Activated B cell treated with CpG ODN at 0.5 μM for 24 hours (primary cell): ENCODE measurements at regions of chr15 and their contacts with region 1.

Region 1: GRCh38 chr15:51229907-51230330 is 108.5 kb downstream of the CYP19A1 start:
- DNase-seq: no peak
- ATAC-seq: no peak
- H3K4me3 Mint-ChIP-seq: no peak overlapping the region
- H3K27ac Mint-ChIP-seq: no peak overlapping the region
- H3K4me1 Mint-ChIP-seq: peaks cover 7% of the 10 kb centered on the region
- H3K27me3 Mint-ChIP-seq: peaks cover 3% of the 10 kb centered on the region
- CTCF ChIP-seq: no peak

Region 2: DNA sequence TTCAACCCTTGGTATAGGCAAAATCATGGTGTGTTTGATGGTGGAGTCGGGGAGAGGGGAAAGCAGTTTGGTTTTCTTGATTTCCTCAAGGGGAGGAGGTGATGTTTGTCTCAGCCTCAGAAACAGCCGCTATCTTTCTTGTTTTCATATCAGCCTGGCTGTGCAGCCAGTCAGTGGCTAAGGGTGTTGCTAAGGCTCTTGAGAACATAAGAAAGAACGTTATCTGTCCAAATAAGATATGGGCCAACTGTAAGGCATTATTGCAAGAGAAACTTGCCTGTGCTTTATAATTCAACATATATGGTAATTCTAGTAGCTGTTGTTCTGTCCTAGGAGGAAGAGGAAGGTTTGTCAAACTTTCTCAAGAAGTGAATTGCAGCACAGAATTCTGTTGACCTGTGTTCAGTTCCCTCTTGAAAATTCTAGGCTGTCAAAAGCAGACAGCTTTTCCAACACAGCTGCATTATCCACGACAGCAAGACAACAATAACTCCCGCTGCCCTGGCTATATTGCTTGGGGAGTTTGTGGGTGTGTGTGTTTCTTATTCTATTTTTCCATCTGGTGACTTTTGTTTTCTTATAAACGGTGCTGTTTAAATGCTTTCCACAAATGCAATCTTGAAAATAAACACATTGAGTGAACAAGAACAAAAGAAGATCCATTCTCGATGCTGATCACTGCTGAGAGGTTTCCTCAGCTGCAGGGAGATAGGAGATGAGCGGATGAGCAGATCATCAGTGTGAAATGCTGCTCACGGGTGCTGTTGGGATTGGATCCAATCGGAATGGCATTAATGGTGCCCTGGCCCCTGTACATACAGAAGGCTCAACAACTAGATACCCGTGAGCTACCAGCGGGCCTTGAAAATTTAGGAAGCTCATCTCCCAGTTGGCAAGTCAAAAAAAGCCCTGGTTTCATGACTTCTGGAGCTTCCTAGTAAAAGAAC is 44.4 kb before region 1 on chr15:
- CTCF ChIA-PET with region 1: no interaction called
- POLR2A ChIA-PET with region 1: no interaction called
- intact Hi-C with region 1: no loop called
- DNase-seq: no peak
- ATAC-seq: no peak
- H3K4me3 Mint-ChIP-seq: no peak overlapping the region
- H3K27ac Mint-ChIP-seq: no peak overlapping the region
- H3K4me1 Mint-ChIP-seq: no peaks in the 10 kb centered on the region
- H3K27me3 Mint-ChIP-seq: peaks cover 23% of the 10 kb centered on the region
- CTCF ChIP-seq: no peak

Region 3: DNA sequence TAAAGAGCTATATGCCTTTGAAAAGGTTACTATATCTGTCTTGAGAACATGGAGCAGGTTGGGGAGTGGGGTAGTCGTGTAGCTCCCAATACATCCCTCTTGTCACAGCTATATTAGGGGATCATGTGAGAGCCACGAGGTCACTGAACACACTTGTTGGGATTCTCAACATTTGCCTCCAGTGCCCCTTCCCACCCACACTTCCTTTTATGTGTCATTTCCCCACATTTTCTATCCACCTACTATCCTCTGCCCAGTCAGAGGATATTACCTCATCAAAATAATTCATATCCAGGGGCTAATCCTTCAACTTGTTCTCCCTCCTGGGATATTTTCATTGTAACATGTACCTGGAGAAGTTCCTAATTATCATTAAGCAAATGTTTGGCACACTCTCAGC is 23.4 kb after region 1 on chr15:
- CTCF ChIA-PET with region 1: no interaction called
- POLR2A ChIA-PET with region 1: no interaction called
- intact Hi-C with region 1: no loop called
- DNase-seq: no peak
- ATAC-seq: no peak
- H3K4me3 Mint-ChIP-seq: no peak overlapping the region
- H3K27ac Mint-ChIP-seq: no peak overlapping the region
- H3K4me1 Mint-ChIP-seq: no peaks in the 10 kb centered on the region
- H3K27me3 Mint-ChIP-seq: peaks cover 17% of the 10 kb centered on the region
- CTCF ChIP-seq: no peak

Region 4: DNA sequence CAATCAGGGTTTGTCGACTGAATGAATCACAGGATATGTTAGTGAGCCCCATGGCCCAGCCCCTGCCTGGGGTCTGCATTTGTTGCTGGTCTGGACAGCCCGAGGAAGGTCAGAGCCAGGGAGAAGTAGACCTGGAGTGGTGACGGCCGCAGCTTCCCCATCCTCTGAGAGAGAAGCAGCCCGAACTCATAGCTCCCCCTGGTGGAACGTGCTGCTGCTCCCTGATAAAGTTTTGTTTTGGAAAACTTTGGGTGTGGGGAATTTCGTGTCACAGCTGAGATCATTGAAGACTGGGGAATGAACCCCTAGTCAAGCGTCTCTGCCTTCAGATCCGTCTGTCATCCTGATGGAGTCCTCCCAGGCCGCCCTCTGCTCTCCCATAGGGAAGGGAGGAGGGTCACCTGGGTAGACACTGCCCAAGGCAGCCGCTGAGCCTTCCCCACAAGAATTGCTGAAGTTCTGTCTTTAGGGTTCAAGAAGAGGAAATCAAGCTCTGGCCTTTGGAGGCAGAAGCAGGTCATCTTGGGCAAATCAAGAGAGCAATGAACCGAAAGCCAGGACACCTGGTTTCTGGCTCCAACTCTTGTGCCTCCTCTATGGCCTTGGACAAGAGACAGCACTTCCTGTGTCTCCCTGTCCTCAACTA is 172.1 kb after region 1 on chr15:
- CTCF ChIA-PET with region 1: interaction called, 4 read pairs
- POLR2A ChIA-PET with region 1: no interaction called
- intact Hi-C with region 1: loop called (anchors 5 kb)
- DNase-seq: no peak
- ATAC-seq: no peak
- H3K4me3 Mint-ChIP-seq: no peak overlapping the region
- H3K27ac Mint-ChIP-seq: no peak overlapping the region
- H3K4me1 Mint-ChIP-seq: no peaks in the 10 kb centered on the region
- H3K27me3 Mint-ChIP-seq: peaks cover 17% of the 10 kb centered on the region
- CTCF ChIP-seq: no peak